Psoas muscle (tissue), 8 donors: ENCODE measurements at regions of chr9 and their contacts with region 1.

Region 1: DNA sequence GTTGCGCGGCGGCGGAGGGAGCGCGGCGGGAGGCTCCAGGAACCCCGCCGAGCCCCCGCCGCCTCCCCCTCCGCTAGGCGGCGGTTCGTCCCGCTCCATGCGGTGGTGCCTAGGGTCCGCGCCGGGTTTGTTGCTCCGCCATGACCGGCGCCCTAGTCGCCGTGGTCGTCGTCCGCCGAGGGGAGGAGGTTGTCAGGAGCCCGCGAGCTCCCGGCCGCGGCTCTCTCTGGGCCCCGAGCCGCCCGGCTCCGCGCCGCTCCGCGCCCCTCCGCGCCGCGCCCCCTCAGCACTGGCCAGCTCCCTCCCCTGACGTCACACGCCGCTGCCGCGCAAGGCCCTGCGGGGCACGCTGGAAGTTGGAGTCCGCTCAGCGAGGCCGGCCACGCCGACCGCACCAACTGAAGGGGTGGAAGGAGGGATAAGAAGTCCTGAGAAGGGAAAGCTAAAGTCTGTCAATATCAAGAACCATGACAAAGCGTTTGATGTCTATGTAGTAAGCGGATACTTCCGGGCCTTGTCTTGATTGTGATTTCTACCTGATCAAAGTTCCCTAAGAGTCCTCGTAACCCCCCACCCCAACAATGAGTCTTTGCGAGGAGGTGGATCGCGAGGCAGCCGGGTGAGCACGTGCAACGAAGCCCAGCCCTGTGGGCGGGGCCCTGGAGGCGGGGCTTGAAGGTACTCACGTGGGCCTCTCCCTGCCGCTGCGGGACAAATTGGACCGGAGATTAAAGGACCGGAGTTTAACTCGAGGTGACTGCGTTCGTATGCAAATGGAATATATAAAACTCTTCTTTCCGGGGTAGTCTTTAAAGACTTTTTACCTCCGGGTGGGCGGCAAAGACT is at the start of gene NR6A1:
- DNase-seq: peak; percentile 97 to 98
- ATAC-seq: peak; percentile 93 to 96 (median 95)
- H3K4me3 ChIP-seq: peak within 1 kb of the TSS; percentile 91
- H3K27ac ChIP-seq: peak within 1 kb of the TSS; percentile 81
- H3K4me1 ChIP-seq: peaks cover 8% of the 10 kb centered on the region
- H3K27me3 ChIP-seq: peaks cover 0 to 10% (median 2%) of the 10 kb centered on the region in 3 donors
- CTCF ChIP-seq: peak; percentile 42
- total RNA-seq, gene NR6A1: 0.54 to 2.6 (median 1.6) TPM

Region 2: DNA sequence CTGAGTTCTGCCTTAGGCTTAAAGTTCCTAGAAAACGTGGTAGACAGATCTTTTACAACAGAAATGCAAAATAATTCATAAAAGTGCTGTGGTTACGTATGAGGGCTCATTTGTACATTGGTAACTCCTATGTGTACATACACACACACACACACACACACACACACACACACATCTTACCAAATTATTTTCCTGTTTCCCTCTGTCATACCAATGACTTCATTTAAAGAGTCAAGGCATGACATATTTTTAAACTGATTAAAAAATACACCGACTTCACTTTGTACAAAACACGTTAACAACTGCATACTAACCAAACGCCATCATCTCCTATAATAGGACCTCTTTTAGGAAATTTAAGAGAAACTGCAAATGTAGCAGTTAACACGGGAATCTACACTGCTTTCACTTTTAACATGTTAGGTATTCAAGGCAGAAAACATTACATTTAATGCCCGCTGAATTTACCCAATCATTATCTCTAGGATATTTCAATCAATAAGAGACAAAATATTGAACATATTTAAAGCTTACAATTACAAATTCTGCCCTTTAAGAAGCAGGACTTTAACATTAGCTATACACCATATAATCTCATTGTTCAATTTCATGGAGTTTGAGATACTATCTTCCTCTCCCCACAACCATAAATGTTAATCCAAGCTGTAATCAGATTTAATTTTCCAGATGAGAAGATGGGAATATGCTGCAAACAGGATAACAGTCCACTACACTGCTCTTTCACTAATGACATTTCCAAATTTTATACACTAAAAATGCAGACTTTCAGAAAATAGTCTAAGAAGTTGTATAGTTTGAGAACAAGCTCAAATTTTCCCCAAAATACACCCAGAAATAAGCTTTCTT is 974.4 kb before region 1 on chr9:
- intact Hi-C with region 1: no loop called
- DNase-seq: no peak
- ATAC-seq: no peak
- H3K4me3 ChIP-seq: no peak overlapping the region
- H3K27ac ChIP-seq: no peak overlapping the region
- H3K4me1 ChIP-seq: peaks cover 12% of the 10 kb centered on the region
- H3K27me3 ChIP-seq: no peaks in the 10 kb centered on the region
- CTCF ChIP-seq: no peak

Region 3: GRCh38 chr9:124852829-124853531 is 81.7 kb after region 1 on chr9 and contains the start of gene WDR38:
- intact Hi-C with region 1: loop called (anchors 1 kb)
- DNase-seq: peak; percentile 83 to 92
- ATAC-seq: peak; percentile 89 to 92 (median 91)
- H3K4me3 ChIP-seq: peak within 1 kb of the TSS; percentile 64
- H3K27ac ChIP-seq: peak within 1 kb of the TSS; percentile 73
- H3K4me1 ChIP-seq: peaks cover 14% of the 10 kb centered on the region
- H3K27me3 ChIP-seq: no peaks in the 10 kb centered on the region
- CTCF ChIP-seq: peak; percentile 99
- total RNA-seq, gene WDR38: not detected

Region 4: GRCh38 chr9:125143375-125144090 is 372.3 kb after region 1 on chr9 and contains the start of gene SCAI:
- intact Hi-C with region 1: loop called in 1 of 2 experiments (anchors 5 kb)
- DNase-seq: peak; percentile 99 to 100
- ATAC-seq: peak; percentile 99 to 100 (median 100)
- H3K4me3 ChIP-seq: peak within 1 kb of the TSS; percentile 69
- H3K27ac ChIP-seq: peak within 1 kb of the TSS; percentile 70
- H3K4me1 ChIP-seq: no peaks in the 10 kb centered on the region
- H3K27me3 ChIP-seq: no peaks in the 10 kb centered on the region
- CTCF ChIP-seq: peak; percentile 100
- total RNA-seq, gene SCAI: 1.8 to 5.2 (median 3.4) TPM

Region 5: DNA sequence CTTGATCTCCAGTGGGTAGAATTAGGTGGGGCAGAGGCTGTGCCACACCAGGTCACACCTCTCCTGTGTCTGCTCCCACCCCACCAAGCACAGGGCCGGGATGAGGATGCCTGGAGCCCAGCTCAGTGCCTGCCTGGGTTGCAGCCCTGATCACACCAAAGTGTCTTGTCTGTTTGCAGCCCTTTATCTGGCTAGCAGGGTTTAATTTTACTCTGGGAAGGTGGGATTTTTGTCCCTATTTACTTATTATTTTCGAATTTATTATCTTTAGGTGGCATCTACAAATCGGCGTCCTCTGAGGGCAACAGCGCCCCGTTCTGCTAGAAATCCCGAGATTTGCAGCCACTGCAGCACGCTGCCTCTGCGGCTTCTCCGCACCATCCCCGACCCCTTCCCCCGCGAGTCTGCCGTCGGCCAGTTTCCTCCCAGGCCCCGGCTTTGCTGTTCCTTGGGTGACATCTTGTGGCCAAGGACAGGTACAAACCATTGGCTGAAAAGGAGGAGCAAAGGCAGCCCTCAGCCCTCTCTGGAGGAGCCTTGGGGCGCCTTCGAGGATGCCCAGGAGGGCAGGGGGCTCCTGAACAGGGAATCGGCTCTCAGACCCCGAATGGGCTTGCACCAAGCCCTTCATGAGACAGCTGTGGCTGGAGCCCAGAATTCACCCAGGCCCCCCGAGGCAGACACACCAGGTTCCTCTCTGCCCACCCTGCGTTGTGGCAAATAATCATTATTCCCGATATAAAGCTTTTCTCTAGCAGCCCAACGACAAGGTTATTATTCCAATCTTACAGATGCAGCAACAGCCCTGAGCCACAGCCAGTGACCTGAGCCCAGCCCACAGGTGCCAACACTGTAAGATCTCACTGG is 603.4 kb after region 1 on chr9:
- intact Hi-C with region 1: loop called (anchors 2 to 10 kb)
- DNase-seq: peak; percentile 54 to 82
- ATAC-seq: peak; percentile 81 to 92 (median 86)
- H3K4me3 ChIP-seq: peak overlapping the region; percentile 52
- H3K27ac ChIP-seq: no peak overlapping the region
- H3K4me1 ChIP-seq: peaks cover 3% of the 10 kb centered on the region
- H3K27me3 ChIP-seq: no peaks in the 10 kb centered on the region
- CTCF ChIP-seq: peak; percentile 78